Left cardiac atrium (tissue), 4 donors: ENCODE measurements at regions of chr10 and their contacts with region 1.

Region 1: GRCh38 chr10:10804998-10805740 is 212.5 kb upstream of the CELF2 start:
- DNase-seq: no peak
- ATAC-seq: peak; percentile 17 to 56

Region 2: GRCh38 chr10:10911471-10911921 is 106.3 kb after region 1 on chr10:
- intact Hi-C with region 1: loop called in 1 of 2 experiments (anchors 5 kb)
- DNase-seq: peak; percentile 78
- ATAC-seq: peak; percentile 81 to 95